B cell (primary cell): ENCODE measurements at regions of chr16 and their contacts with region 1.

Region 1: GRCh38 chr16:9134739-9135138 is 43.3 kb downstream of the HAPSTR1 start:
- DNase-seq: peak; percentile 74
- ATAC-seq: peak; percentile 63
- H3K4me3 ChIP-seq: no peak overlapping the region
- H3K4me3 Mint-ChIP-seq: no peak overlapping the region
- H3K27ac ChIP-seq: no peak overlapping the region
- H3K27ac Mint-ChIP-seq: peak overlapping the region; percentile 70
- H3K4me1 ChIP-seq: peaks cover 23 to 38% of the 10 kb centered on the region in 2 donors
- H3K4me1 Mint-ChIP-seq: peaks cover 37% of the 10 kb centered on the region
- H3K27me3 ChIP-seq: peaks cover 0 to 3% (median 0%) of the 10 kb centered on the region in 4 experiments
- H3K27me3 Mint-ChIP-seq: peaks cover 3% of the 10 kb centered on the region
- CTCF ChIP-seq: peak; percentile 76

Region 2: GRCh38 chr16:8567750-8568617 is 566.8 kb before region 1 on chr16:
- CTCF ChIA-PET with region 1: interaction called, 8 read pairs
- POLR2A ChIA-PET with region 1: no interaction called
- intact Hi-C with region 1: loop called (anchors 1 kb)
- DNase-seq: peak; percentile 86
- ATAC-seq: peak; percentile 93
- H3K4me3 ChIP-seq: no peak overlapping the region
- H3K4me3 Mint-ChIP-seq: no peak overlapping the region
- H3K27ac ChIP-seq: no peak overlapping the region
- H3K27ac Mint-ChIP-seq: peak overlapping the region; percentile 34
- H3K4me1 ChIP-seq: peaks cover 0 to 6% of the 10 kb centered on the region in 2 donors
- H3K4me1 Mint-ChIP-seq: peaks cover 7% of the 10 kb centered on the region
- H3K27me3 ChIP-seq: peaks cover 0 to 3% (median 0%) of the 10 kb centered on the region in 4 experiments
- H3K27me3 Mint-ChIP-seq: peaks cover 16% of the 10 kb centered on the region
- CTCF ChIP-seq: peak; percentile 100

Region 3: GRCh38 chr16:8878521-8878911 is 256.2 kb before region 1 on chr16:
- CTCF ChIA-PET with region 1: interaction called, 22 read pairs
- POLR2A ChIA-PET with region 1: no interaction called
- intact Hi-C with region 1: no loop called
- DNase-seq: no peak
- ATAC-seq: no peak
- H3K4me3 ChIP-seq: no peak overlapping the region
- H3K4me3 Mint-ChIP-seq: no peak overlapping the region
- H3K27ac ChIP-seq: no peak overlapping the region
- H3K27ac Mint-ChIP-seq: no peak overlapping the region
- H3K4me1 ChIP-seq: peaks cover 0 to 5% of the 10 kb centered on the region in 2 donors
- H3K4me1 Mint-ChIP-seq: peaks cover 7% of the 10 kb centered on the region
- H3K27me3 ChIP-seq: peaks cover 0 to 6% (median 3%) of the 10 kb centered on the region in 4 experiments
- H3K27me3 Mint-ChIP-seq: peaks cover 8% of the 10 kb centered on the region
- CTCF ChIP-seq: no peak

Region 4: DNA sequence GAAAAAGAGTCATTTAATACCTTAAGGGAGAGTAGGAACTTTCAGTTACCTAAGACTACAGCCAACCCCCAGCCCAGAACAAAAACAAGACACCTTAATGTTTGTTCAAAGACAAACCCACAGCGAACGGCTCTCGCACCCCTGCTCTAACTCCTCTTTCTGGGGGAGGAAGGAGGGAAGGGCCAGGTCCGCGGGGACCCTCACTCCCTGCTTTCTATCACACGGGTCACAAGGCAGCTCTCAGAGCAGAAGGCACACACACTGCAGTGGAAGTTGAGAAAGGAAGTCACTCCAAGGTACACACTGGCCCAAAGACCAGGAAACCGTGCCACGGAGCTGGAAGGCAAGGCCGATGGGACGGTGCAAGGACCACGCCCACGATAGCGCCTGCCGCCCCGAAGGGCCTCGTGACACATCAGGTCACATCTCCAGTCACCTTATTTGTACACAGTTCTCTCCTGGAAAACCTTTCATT is 242.6 kb before region 1 on chr16:
- CTCF ChIA-PET with region 1: interaction called, 18 read pairs
- POLR2A ChIA-PET with region 1: interaction called, 3 read pairs
- intact Hi-C with region 1: loop called (anchors 1 kb)
- DNase-seq: peak; percentile 53
- ATAC-seq: no peak
- H3K4me3 ChIP-seq: no peak overlapping the region
- H3K4me3 Mint-ChIP-seq: peak overlapping the region; percentile 68
- H3K27ac ChIP-seq: peak overlapping the region; percentile 41 to 86
- H3K27ac Mint-ChIP-seq: peak overlapping the region; percentile 95
- H3K4me1 ChIP-seq: peaks cover 18 to 40% of the 10 kb centered on the region in 2 donors
- H3K4me1 Mint-ChIP-seq: peaks cover 36% of the 10 kb centered on the region
- H3K27me3 ChIP-seq: no peaks in the 10 kb centered on the region
- H3K27me3 Mint-ChIP-seq: no peaks in the 10 kb centered on the region
- CTCF ChIP-seq: no peak

Region 5: GRCh38 chr16:9090960-9091866 is 43.5 kb before region 1 on chr16 and contains the start of gene HAPSTR1:
- CTCF ChIA-PET with region 1: interaction called, 6 read pairs
- POLR2A ChIA-PET with region 1: interaction called, 10 read pairs
- intact Hi-C with region 1: loop called (anchors 5 kb)
- DNase-seq: peak; percentile 100
- ATAC-seq: peak; percentile 84
- H3K4me3 ChIP-seq: peak within 1 kb of the TSS; percentile 84 to 95 (median 88)
- H3K4me3 Mint-ChIP-seq: peak within 1 kb of the TSS; percentile 97
- H3K27ac ChIP-seq: peak within 1 kb of the TSS; percentile 90 to 98
- H3K27ac Mint-ChIP-seq: peak within 1 kb of the TSS; percentile 98
- H3K4me1 ChIP-seq: peaks cover 31 to 37% of the 10 kb centered on the region in 2 donors
- H3K4me1 Mint-ChIP-seq: peaks cover 38% of the 10 kb centered on the region
- H3K27me3 ChIP-seq: no peaks in the 10 kb centered on the region
- H3K27me3 Mint-ChIP-seq: no peaks in the 10 kb centered on the region
- CTCF ChIP-seq: no peak
- total RNA-seq, gene HAPSTR1: 99.2 and 101 TPM in 2 replicates

Region 6: DNA sequence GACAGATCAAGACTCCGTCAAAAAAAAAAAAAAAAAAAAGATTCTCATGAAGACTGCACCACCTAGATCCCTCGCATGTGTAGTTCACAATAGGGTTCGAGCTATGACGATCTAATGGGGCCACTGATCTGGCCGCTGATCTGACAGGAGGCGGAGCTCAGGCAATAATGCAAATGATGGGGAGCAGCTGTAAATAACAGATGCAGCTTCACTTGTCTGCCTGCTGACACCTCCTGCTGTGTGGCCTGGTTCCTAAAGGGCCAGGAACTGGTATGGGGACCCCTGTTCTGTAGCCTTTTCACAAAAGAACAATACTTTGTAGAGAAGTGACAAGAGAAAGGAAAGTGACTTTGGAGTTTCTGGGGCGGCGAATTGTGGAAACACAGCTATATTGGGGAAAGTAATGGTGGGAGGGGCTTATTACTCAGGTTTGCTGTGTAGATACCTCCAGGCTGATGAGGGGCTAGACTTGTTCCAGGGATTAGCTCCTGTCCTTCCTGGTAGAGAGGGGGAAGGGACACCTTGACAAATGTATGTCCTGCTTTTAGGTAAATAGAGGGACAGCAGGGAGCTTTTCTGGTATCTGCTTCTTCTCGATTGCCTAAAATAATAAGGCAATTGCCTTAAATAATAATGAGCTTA is 13.8 kb after region 1 on chr16:
- CTCF ChIA-PET with region 1: interaction called, 14 read pairs
- POLR2A ChIA-PET with region 1: no interaction called
- intact Hi-C with region 1: no loop called
- DNase-seq: no peak
- ATAC-seq: no peak
- H3K4me3 ChIP-seq: no peak overlapping the region
- H3K4me3 Mint-ChIP-seq: no peak overlapping the region
- H3K27ac ChIP-seq: no peak overlapping the region
- H3K27ac Mint-ChIP-seq: no peak overlapping the region
- H3K4me1 ChIP-seq: no peaks in the 10 kb centered on the region
- H3K4me1 Mint-ChIP-seq: no peaks in the 10 kb centered on the region
- H3K27me3 ChIP-seq: no peaks in the 10 kb centered on the region
- H3K27me3 Mint-ChIP-seq: peaks cover 7% of the 10 kb centered on the region
- CTCF ChIP-seq: no peak

Region 7: DNA sequence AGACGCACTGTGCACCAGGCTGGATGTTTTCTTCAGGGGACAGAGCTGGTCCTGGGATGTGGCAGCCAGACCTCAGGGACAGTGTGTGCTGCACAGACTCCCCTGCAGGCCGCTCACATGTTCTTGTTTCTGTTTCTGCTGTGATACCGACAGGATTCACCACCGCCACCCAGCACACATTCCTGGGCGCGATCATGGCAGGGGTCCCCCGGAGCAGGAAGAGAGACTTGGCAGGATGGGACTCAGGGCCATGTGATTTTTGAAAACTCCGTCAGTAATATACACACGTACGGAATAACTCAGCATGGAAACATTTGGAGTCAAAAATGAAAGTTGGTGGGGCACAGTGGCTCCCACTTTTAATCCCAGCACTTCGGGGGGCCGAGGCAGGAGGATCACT is 35.7 kb after region 1 on chr16:
- CTCF ChIA-PET with region 1: no interaction called
- POLR2A ChIA-PET with region 1: no interaction called
- intact Hi-C with region 1: no loop called
- DNase-seq: no peak
- ATAC-seq: no peak
- H3K4me3 ChIP-seq: no peak overlapping the region
- H3K4me3 Mint-ChIP-seq: no peak overlapping the region
- H3K27ac ChIP-seq: no peak overlapping the region
- H3K27ac Mint-ChIP-seq: no peak overlapping the region
- H3K4me1 ChIP-seq: peaks cover 0 to 3% of the 10 kb centered on the region in 2 donors
- H3K4me1 Mint-ChIP-seq: peaks cover 13% of the 10 kb centered on the region
- H3K27me3 ChIP-seq: no peaks in the 10 kb centered on the region
- H3K27me3 Mint-ChIP-seq: peaks cover 15% of the 10 kb centered on the region
- CTCF ChIP-seq: no peak

Region 8: GRCh38 chr16:9192746-9193145 is 58.0 kb after region 1 on chr16:
- CTCF ChIA-PET with region 1: no interaction called
- POLR2A ChIA-PET with region 1: no interaction called
- intact Hi-C with region 1: no loop called
- DNase-seq: no peak
- ATAC-seq: no peak
- H3K4me3 ChIP-seq: no peak overlapping the region
- H3K4me3 Mint-ChIP-seq: no peak overlapping the region
- H3K27ac ChIP-seq: no peak overlapping the region
- H3K27ac Mint-ChIP-seq: no peak overlapping the region
- H3K4me1 ChIP-seq: no peaks in the 10 kb centered on the region
- H3K4me1 Mint-ChIP-seq: no peaks in the 10 kb centered on the region
- H3K27me3 ChIP-seq: peaks cover 0 to 9% (median 0%) of the 10 kb centered on the region in 4 experiments
- H3K27me3 Mint-ChIP-seq: peaks cover 12% of the 10 kb centered on the region
- CTCF ChIP-seq: no peak